ENCODE measurements at regions of chr16 and their contacts with region 1.

Region 1: DNA sequence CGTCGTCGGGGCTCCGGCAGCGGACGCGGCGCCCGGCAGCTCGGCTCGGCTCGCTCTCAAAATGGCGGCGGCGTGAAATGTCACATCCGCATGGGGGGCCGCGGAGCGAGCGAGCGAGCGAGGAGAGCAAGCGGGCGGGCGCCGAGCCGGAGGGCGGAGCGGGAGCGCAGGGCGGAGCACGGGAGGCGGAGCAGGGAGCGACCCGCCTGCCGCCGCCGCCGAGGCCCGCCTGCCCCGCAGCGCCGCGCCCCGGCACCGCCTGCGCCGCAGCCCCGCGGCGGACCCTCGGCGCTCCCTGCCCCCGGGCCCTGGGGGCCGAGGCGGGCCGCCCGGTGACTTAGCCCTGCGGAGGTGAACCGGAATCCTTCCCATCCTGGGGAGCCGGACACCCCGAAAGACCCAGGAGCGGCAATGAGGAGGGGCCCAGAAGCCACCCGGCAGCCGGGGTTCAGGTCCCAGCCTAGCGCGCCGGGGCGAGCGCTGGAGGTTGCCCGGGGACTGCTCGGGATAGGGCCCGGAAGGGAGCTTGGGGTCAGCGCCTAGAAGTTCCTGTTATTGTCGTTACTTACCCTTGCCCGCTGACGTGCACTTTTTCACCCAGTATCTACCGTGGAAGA is at the start of gene USP7:
- DNase-seq: peak; percentile 91 to 96
- ATAC-seq: peak; percentile 92 to 98 (median 94)
- H3K4me3 ChIP-seq: peak within 1 kb of the TSS; percentile 67
- H3K4me3 Mint-ChIP-seq: peak within 1 kb of the TSS; percentile 96
- H3K27ac ChIP-seq: peak within 1 kb of the TSS; percentile 74
- H3K27ac Mint-ChIP-seq: peak within 1 kb of the TSS; percentile 84 to 89
- H3K4me1 ChIP-seq: peaks cover 40% of the 10 kb centered on the region
- H3K4me1 Mint-ChIP-seq: peaks cover 36 to 44% of the 10 kb centered on the region in 2 donors
- H3K27me3 ChIP-seq: no peaks in the 10 kb centered on the region
- H3K27me3 Mint-ChIP-seq: no peaks in the 10 kb centered on the region
- CTCF ChIP-seq: no peak
- total RNA-seq, gene USP7: 213 to 268 (median 236) TPM

Region 2: DNA sequence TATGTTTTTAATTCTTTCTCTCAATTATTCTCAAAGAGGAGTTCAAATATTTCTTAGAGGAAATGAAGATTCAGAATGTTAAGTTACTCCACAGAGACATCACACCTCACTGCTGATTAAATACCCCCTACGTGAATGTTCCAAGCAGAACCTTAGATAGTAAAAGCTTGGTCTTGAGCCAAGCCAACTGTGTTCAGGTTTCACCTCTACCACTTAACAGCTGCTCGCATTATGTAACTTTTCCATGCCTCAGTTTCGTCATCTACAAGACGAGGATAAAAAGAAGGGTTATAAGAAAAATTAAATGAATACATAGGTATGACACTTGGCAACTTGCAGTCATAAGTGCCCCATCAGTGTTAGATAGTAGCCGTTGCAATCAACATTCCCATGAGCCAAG is 1275.1 kb before region 1 on chr16:
- intact Hi-C with region 1: no loop called
- DNase-seq: no peak
- ATAC-seq: no peak
- H3K4me3 ChIP-seq: no peak overlapping the region
- H3K4me3 Mint-ChIP-seq: no peak overlapping the region
- H3K27ac ChIP-seq: no peak overlapping the region
- H3K27ac Mint-ChIP-seq: no peak overlapping the region
- H3K4me1 ChIP-seq: no peaks in the 10 kb centered on the region
- H3K4me1 Mint-ChIP-seq: no peaks in the 10 kb centered on the region
- H3K27me3 ChIP-seq: no peaks in the 10 kb centered on the region
- H3K27me3 Mint-ChIP-seq: no peaks in the 10 kb centered on the region
- CTCF ChIP-seq: no peak

Region 3: DNA sequence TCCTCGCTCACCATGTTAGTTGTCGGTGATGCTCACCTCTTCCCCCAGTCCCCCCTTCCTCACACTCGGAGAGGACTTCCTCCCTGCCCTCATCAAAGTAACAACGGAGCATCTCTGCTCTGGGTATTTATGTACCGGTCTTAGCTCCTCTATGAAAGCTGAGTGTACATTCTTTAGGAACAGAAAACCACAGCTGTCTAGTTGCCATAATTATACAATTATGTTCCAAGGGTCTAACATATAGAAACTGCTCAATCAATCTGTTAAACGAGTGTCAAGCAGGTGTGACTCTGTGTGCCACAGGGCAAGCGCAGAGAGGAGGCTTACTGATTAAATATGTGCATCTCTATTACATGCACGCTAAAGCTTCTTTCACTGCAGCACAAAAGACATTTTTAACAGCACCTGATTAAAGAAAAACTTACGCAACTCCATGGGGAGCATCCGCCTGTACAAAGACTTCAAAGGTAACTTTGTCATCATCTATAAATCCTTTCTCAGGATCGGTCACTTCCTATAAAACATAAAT is 43.9 kb before region 1 on chr16:
- intact Hi-C with region 1: loop called (anchors 10 kb)
- DNase-seq: peak in 1 of 2 donors; percentile 28
- ATAC-seq: no peak
- H3K4me3 ChIP-seq: no peak overlapping the region
- H3K4me3 Mint-ChIP-seq: no peak overlapping the region
- H3K27ac ChIP-seq: no peak overlapping the region
- H3K27ac Mint-ChIP-seq: peak overlapping the region; percentile 36 to 47
- H3K4me1 ChIP-seq: peaks cover 5% of the 10 kb centered on the region
- H3K4me1 Mint-ChIP-seq: peaks cover 30 to 51% of the 10 kb centered on the region in 2 donors
- H3K27me3 ChIP-seq: no peaks in the 10 kb centered on the region
- H3K27me3 Mint-ChIP-seq: no peaks in the 10 kb centered on the region
- CTCF ChIP-seq: no peak

Region 4: GRCh38 chr16:8998114-8998513 is 34.2 kb after region 1 on chr16:
- intact Hi-C with region 1: no loop called
- DNase-seq: no peak
- ATAC-seq: no peak
- H3K4me3 ChIP-seq: no peak overlapping the region
- H3K4me3 Mint-ChIP-seq: no peak overlapping the region
- H3K27ac ChIP-seq: no peak overlapping the region
- H3K27ac Mint-ChIP-seq: no peak overlapping the region
- H3K4me1 ChIP-seq: no peaks in the 10 kb centered on the region
- H3K4me1 Mint-ChIP-seq: no peaks in the 10 kb centered on the region
- H3K27me3 ChIP-seq: no peaks in the 10 kb centered on the region
- H3K27me3 Mint-ChIP-seq: no peaks in the 10 kb centered on the region
- CTCF ChIP-seq: no peak